Naive thymus-derived CD4-positive, alpha-beta T cell (primary cell): ENCODE measurements at regions of chr11 and their contacts with region 1.

Region 1: DNA sequence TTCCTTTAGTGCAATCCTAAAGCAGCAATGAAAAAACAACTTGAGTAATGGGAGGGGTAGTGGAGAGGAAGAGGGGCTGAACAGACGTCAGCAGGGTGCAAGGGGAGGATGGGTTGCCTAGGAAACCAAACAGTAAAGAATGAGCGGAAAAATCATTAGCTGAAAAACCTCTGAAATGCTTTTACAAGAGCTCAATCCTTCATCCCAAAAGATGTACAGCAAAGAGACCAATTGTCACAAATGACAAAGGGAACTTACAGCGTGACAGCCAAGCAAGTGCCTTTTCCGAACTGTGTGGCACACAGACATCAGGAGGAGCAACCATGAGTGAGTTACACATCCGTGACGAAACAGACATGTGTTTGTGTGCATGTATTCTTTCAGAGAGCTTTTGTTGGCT is 104.6 kb downstream of the SIK3 start:
- DNase-seq: peak in 7 of 9 donors; percentile 46 to 76 (median 70)
- ATAC-seq: peak; percentile 84
- H3K4me3 ChIP-seq: no peak overlapping the region
- H3K4me3 Mint-ChIP-seq: peak overlapping the region; percentile 23 to 81 (median 64)
- H3K27ac ChIP-seq: peak overlapping the region; percentile 61
- H3K27ac Mint-ChIP-seq: peak overlapping the region; percentile 61 to 98 (median 92)
- H3K4me1 ChIP-seq: peaks cover 5 to 14% of the 10 kb centered on the region in 2 donors
- H3K4me1 Mint-ChIP-seq: peaks cover 33 to 79% (median 64%) of the 10 kb centered on the region in 7 donors
- H3K27me3 ChIP-seq: no peaks in the 10 kb centered on the region
- H3K27me3 Mint-ChIP-seq: no peaks in the 10 kb centered on the region

Region 2: DNA sequence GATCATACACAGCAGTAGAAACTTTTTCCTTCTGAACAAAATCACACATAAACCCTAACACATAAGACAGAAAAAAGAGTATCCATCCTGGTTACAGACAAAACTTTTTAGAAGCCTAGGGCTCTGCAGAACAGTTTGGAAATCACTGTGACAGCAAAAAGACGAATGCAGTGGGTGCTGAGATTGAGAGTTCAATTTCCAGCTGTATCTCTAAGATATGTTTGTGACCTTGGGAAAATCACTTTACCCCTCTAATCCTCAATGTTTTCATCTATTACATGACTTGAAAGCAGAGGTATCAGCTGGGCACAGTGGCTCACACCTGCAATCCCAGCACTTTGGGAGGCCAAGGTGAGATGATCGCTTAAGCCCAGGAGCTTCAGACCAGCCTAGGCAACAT is 23.9 kb before region 1 on chr11:
- CTCF ChIA-PET with region 1: no interaction called
- POLR2A ChIA-PET with region 1: no interaction called
- intact Hi-C with region 1: no loop called
- DNase-seq: no peak
- ATAC-seq: no peak
- H3K4me3 ChIP-seq: no peak overlapping the region
- H3K4me3 Mint-ChIP-seq: peak overlapping the region in 1 of 10 donors; percentile 14
- H3K27ac ChIP-seq: no peak overlapping the region
- H3K27ac Mint-ChIP-seq: peak overlapping the region in 1 of 9 donors; percentile 70
- H3K4me1 ChIP-seq: no peaks in the 10 kb centered on the region
- H3K4me1 Mint-ChIP-seq: peaks cover 11 to 51% (median 38%) of the 10 kb centered on the region in 7 donors
- H3K27me3 ChIP-seq: no peaks in the 10 kb centered on the region
- H3K27me3 Mint-ChIP-seq: no peaks in the 10 kb centered on the region

Region 3: DNA sequence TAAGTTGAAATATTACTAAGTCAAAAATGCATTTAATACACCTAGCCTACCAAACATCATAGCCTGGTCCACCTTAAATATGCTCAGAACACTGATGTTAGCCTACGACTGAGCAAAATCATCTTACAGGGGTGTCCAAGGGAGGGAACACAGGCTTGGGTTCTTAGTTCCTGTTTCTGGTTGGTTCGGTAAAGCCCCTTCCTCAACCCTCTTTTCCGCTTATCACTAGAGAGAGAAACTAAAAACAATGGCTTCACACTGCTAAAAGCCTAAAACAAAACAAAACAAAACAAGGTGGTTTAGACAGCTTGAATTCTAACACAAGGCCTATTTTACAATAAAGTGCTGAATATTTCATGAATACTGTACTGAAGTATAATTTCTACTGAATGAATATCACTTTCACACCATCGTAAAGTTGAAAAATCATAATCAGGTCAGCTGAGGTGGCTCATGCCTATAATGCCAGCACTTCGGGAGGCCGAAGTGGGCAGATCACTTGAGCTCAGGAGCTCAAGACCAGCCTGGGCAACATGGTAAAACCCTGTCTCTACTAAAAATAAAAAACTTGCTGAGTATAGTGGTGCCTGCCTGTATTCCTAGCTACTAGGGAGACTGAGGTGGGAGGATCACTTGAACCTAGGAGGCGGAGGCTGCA is 13.3 kb before region 1 on chr11:
- CTCF ChIA-PET with region 1: no interaction called
- POLR2A ChIA-PET with region 1: no interaction called
- intact Hi-C with region 1: loop called in 1 of 2 experiments (anchors 2 kb)
- DNase-seq: peak in 7 of 9 donors; percentile 17 to 46 (median 28)
- ATAC-seq: peak; percentile 89
- H3K4me3 ChIP-seq: no peak overlapping the region
- H3K4me3 Mint-ChIP-seq: peak overlapping the region; percentile 44 to 82 (median 68)
- H3K27ac ChIP-seq: peak overlapping the region; percentile 64
- H3K27ac Mint-ChIP-seq: peak overlapping the region; percentile 65 to 90 (median 86)
- H3K4me1 ChIP-seq: peaks cover 0 to 8% of the 10 kb centered on the region in 2 donors
- H3K4me1 Mint-ChIP-seq: peaks cover 25 to 64% (median 54%) of the 10 kb centered on the region in 7 donors
- H3K27me3 ChIP-seq: no peaks in the 10 kb centered on the region
- H3K27me3 Mint-ChIP-seq: no peaks in the 10 kb centered on the region